ENCODE measurements at regions of chr6 and their contacts with region 1.

Region 1: DNA sequence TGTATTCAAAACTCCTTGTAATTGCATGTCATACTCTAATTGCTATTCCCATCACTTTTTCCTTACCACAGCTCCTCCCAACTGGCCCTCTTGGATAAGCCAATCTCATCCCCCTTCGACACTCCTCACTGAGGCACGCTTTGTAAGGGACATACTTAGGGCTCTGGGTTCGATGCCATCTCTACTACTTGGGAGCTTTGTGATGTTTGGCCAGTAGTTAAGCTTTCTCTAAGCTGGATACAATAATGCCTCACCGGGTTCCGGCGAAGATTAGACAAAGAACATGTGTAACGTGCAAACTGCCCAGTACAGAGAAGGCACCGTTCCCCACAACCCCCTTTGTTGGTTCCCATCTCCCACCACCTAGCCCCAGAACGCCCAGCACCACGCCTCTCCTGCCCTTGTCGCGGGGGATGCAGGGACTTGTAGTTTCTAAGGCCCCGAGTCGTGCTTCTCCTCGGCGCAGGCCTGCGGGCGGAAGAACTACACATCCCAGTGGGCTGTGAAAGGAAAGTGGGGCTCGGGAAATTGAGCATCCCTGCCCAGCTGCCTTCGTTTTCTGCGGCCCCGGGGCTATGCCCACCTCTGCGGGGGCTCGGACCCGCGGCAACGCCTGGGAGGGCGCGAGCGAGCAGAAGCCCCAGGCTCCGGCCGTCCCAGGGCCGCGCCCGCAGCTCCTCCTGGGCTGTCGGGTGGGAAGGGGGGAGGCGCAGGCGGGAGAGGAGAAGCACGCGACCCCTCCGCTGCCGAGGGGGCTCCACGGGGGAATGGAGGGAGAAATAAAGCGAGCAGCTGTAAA is 1.1 kb upstream of the ZDHHC14 start:
- DNase-seq: peak; percentile 93
- ATAC-seq: peak; percentile 87
- H3K4me3 Mint-ChIP-seq: peak overlapping the region; percentile 73
- H3K27ac Mint-ChIP-seq: peak overlapping the region; percentile 32
- H3K4me1 Mint-ChIP-seq: peaks cover 34% of the 10 kb centered on the region
- H3K27me3 Mint-ChIP-seq: peaks cover 8% of the 10 kb centered on the region

Region 2: DNA sequence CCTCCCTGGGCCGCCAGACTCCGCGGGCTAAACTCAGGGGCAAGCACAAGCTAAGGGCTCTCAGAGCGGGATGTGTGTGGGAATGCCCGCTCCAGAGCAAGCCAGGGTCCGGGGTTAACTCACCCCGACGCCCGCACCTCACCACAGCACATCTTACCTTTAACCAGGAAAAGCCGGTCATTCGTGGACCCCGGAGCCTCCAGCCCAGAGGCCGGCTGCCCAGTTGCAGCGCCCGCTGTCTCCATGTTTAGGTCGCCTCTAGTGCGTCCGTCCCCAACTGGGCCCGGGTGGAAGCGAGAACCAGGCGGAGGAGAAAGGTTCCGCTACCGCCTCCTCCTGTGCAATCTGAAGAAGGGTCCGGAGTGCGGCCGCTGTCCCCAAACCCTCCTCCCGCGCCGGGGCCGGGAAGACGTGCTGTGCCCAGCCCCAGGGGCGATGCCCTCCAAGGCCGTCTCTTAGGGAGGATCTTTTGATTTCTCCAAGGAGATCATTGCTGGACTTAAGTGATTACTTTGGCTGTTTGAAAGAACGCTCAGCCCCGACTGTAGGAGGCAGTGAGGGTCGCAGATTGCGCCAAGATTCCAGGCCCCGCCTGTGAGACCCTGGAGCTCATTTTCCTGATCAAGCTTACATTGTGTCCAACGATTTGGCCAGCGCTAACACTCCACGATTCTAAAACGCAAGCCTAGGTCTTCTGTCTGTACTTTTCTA is 56.4 kb before region 1 on chr6 and contains the start of gene TMEM242:
- CTCF ChIA-PET with region 1: interaction called, 9 read pairs
- POLR2A ChIA-PET with region 1: interaction called, 5 read pairs
- intact Hi-C with region 1: loop called (anchors 1 kb)
- DNase-seq: peak; percentile 93
- ATAC-seq: peak; percentile 91
- H3K4me3 Mint-ChIP-seq: peak within 1 kb of the TSS; percentile 90
- H3K27ac Mint-ChIP-seq: peak within 1 kb of the TSS; percentile 87
- H3K4me1 Mint-ChIP-seq: peaks cover 30% of the 10 kb centered on the region
- H3K27me3 Mint-ChIP-seq: peaks cover 13% of the 10 kb centered on the region
- total RNA-seq, gene TMEM242: 4.7 to 7.7 TPM

Region 3: DNA sequence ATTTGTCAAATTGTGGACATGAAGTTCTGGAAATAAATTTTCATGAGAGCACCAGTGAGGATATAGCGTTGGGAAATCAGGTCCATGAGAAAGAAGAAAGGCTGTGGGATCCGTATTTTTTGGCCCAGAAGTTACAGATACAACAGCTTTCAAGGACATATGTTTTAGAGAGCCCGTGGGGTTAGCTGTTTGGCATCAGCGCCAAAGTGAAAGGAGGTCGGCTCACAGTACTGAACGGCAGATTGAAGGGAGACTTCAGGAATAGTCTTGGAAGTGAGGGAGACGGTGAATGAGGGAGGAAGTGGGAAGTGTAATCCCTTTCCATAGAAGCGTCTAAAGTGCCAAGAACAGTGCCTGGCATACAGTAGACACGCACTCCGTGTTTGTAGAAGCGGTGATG is 32.9 kb after region 1 on chr6:
- CTCF ChIA-PET with region 1: no interaction called
- POLR2A ChIA-PET with region 1: no interaction called
- intact Hi-C with region 1: no loop called
- DNase-seq: no peak
- ATAC-seq: no peak
- H3K4me3 Mint-ChIP-seq: no peak overlapping the region
- H3K27ac Mint-ChIP-seq: no peak overlapping the region
- H3K4me1 Mint-ChIP-seq: no peaks in the 10 kb centered on the region
- H3K27me3 Mint-ChIP-seq: no peaks in the 10 kb centered on the region

Region 4: GRCh38 chr6:157461000-157461915 is 81.4 kb after region 1 on chr6:
- CTCF ChIA-PET with region 1: no interaction called
- POLR2A ChIA-PET with region 1: interaction called, 3 read pairs
- intact Hi-C with region 1: loop called (anchors 1 to 2 kb)
- DNase-seq: peak; percentile 90
- ATAC-seq: peak; percentile 77
- H3K4me3 Mint-ChIP-seq: no peak overlapping the region
- H3K27ac Mint-ChIP-seq: peak overlapping the region; percentile 89
- H3K4me1 Mint-ChIP-seq: peaks cover 56% of the 10 kb centered on the region
- H3K27me3 Mint-ChIP-seq: no peaks in the 10 kb centered on the region

Region 5: GRCh38 chr6:157667211-157668008 is 287.6 kb after region 1 on chr6:
- CTCF ChIA-PET with region 1: no interaction called
- POLR2A ChIA-PET with region 1: no interaction called
- intact Hi-C with region 1: loop called in 1 of 2 experiments (anchors 5 kb)
- DNase-seq: peak; percentile 73
- ATAC-seq: peak; percentile 48
- H3K4me3 Mint-ChIP-seq: no peak overlapping the region
- H3K27ac Mint-ChIP-seq: no peak overlapping the region
- H3K4me1 Mint-ChIP-seq: peaks cover 31% of the 10 kb centered on the region
- H3K27me3 Mint-ChIP-seq: peaks cover 5% of the 10 kb centered on the region

Region 6: GRCh38 chr6:158168040-158168289 is 788.1 kb after region 1 on chr6 and contains the start of gene SERAC1:
- CTCF ChIA-PET with region 1: no interaction called
- POLR2A ChIA-PET with region 1: no interaction called
- intact Hi-C with region 1: loop called in 1 of 2 experiments (anchors 5 kb)
- DNase-seq: no peak
- ATAC-seq: peak; percentile 30
- H3K4me3 Mint-ChIP-seq: peak within 1 kb of the TSS; percentile 89
- H3K27ac Mint-ChIP-seq: peak within 1 kb of the TSS; percentile 95
- H3K4me1 Mint-ChIP-seq: peaks cover 21% of the 10 kb centered on the region
- H3K27me3 Mint-ChIP-seq: no peaks in the 10 kb centered on the region
- total RNA-seq, gene SERAC1: 3.9 to 5.7 TPM

Measured in activated CD4-positive, alpha-beta T cell treated with anti-CD3 and anti-CD28 coated beads for 36 hours (primary cell).